AG04449 (cell line): ENCODE measurements at regions of chr7 and their contacts with region 1.

Region 1: GRCh38 chr7:143008007-143008901 is 18.7 kb downstream of the OR9A2 start:
- DNase-seq: no peak
- H3K4me3 ChIP-seq: no peak overlapping the region
- CTCF ChIP-seq: peak; percentile 97

Region 2: DNA sequence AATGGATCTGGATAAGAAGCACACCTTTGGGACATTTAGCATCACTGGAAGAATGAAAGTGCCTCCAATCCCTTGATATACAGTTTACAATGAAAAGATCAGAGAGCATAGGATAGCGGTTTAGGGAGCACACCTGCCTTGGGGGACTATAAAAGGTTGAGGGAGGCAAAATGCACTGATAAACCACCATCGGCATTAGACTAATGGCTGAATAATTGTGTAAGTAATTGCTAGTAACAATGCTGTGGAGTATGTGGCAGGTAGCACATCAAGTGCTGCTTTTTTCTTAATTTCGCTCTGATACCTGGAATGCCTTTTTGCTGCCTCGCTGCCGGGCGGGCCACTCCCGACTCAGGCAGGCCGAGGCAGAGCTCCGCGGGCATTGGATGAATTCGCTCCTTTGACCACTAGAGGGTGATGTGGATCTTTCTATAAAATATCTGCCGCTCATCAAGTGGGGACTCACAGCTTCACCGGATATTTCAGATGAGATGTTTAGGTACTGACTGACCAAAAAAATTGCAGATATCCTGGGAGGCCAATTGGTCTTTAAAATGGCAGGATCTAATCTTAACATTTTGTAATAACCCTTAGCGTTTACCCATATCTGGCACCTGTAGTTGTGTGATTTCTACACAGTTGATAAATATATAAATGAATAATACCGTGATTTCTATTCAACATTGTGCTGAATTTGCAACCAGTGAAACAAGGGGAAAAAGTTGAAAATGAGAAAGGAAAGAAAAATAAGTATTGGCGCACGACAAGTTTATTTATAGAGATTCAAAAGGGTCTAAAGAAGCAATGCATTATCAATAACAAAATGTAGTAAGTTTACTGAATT is 375.7 kb before region 1 on chr7:
- CTCF ChIA-PET with region 1: interaction called, 46 read pairs
- POLR2A ChIA-PET with region 1: no interaction called
- DNase-seq: no peak
- H3K4me3 ChIP-seq: no peak overlapping the region
- CTCF ChIP-seq: peak; percentile 65

Region 3: GRCh38 chr7:142853739-142854371 is 154.4 kb before region 1 on chr7:
- CTCF ChIA-PET with region 1: interaction called, 43 read pairs
- POLR2A ChIA-PET with region 1: no interaction called
- DNase-seq: no peak
- H3K4me3 ChIP-seq: peak overlapping the region; percentile 72
- CTCF ChIP-seq: peak; percentile 70

Region 4: GRCh38 chr7:142873281-142873787 is 134.9 kb before region 1 on chr7:
- CTCF ChIA-PET with region 1: interaction called, 17 read pairs
- POLR2A ChIA-PET with region 1: no interaction called
- DNase-seq: no peak
- H3K4me3 ChIP-seq: no peak overlapping the region
- CTCF ChIP-seq: peak; percentile 50

Region 5: DNA sequence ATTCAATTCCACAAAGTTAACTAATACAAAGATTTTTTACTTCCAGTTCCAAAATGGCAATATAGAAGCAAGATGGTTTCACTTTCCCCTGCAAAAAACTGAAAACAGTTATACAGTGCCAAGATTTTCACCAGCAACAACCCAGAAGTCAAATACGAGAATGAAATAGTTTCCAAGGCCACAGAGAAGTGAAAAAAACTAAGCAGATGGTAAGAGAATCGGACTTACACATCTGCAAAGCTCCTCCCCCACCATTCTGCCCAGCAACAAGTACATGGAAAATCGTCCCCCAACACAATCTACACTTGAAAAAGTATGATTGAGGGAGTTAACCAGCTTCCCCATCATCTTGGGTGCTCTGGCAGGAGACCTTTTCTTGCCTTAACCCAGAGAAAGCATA is 15.8 kb before region 1 on chr7:
- CTCF ChIA-PET with region 1: interaction called, 36 read pairs
- POLR2A ChIA-PET with region 1: no interaction called
- DNase-seq: no peak
- H3K4me3 ChIP-seq: no peak overlapping the region
- CTCF ChIP-seq: no peak

Region 6: GRCh38 chr7:143203386-143203785 is 195.1 kb after region 1 on chr7:
- CTCF ChIA-PET with region 1: interaction called, 21 read pairs
- POLR2A ChIA-PET with region 1: no interaction called
- DNase-seq: no peak
- H3K4me3 ChIP-seq: no peak overlapping the region
- CTCF ChIP-seq: no peak